Activated CD4-positive, alpha-beta T cell treated with anti-CD3 and anti-CD28 coated beads for 36 hours (primary cell): ENCODE measurements at regions of chr1 and their contacts with region 1.

Region 1: GRCh38 chr1:180502360-180503273 is at the start of gene ACBD6:
- DNase-seq: peak; percentile 94
- ATAC-seq: peak; percentile 95
- H3K4me3 Mint-ChIP-seq: peak within 1 kb of the TSS; percentile 96
- H3K27ac Mint-ChIP-seq: peak within 1 kb of the TSS; percentile 97
- H3K4me1 Mint-ChIP-seq: peaks cover 33% of the 10 kb centered on the region
- H3K27me3 Mint-ChIP-seq: no peaks in the 10 kb centered on the region
- total RNA-seq, gene ACBD6: 45.6 to 46.8 TPM

Region 2: GRCh38 chr1:179954493-179955297 is 547.9 kb before region 1 on chr1 and contains the start of gene CEP350:
- CTCF ChIA-PET with region 1: no interaction called
- POLR2A ChIA-PET with region 1: no interaction called
- intact Hi-C with region 1: loop called in 1 of 2 experiments (anchors 1 kb)
- DNase-seq: peak; percentile 99
- ATAC-seq: peak; percentile 94
- H3K4me3 Mint-ChIP-seq: peak within 1 kb of the TSS; percentile 82
- H3K27ac Mint-ChIP-seq: peak within 1 kb of the TSS; percentile 98
- H3K4me1 Mint-ChIP-seq: peaks cover 47% of the 10 kb centered on the region
- H3K27me3 Mint-ChIP-seq: no peaks in the 10 kb centered on the region
- total RNA-seq, gene CEP350: 38.2 to 42.1 TPM

Region 3: DNA sequence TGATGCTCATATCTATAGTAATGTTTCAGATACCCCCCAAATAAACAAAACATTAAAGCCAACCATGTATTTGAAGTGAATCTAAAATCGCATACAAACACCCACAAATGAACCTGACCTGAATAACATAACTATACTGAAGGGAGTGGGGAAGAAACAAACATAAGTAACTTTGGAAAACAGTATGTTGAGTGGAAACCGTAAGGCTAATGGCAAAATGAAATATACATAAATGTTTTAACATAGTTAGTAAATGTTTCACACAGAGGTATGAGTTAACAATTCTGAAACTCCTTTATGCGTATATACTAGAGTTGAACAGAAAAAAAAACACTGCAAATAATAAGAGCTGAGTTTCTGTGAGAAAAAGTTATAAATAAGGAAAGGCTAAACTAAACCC is 125.8 kb before region 1 on chr1:
- CTCF ChIA-PET with region 1: no interaction called
- POLR2A ChIA-PET with region 1: no interaction called
- intact Hi-C with region 1: no loop called
- DNase-seq: no peak
- ATAC-seq: no peak
- H3K4me3 Mint-ChIP-seq: no peak overlapping the region
- H3K27ac Mint-ChIP-seq: no peak overlapping the region
- H3K4me1 Mint-ChIP-seq: peaks cover 19% of the 10 kb centered on the region
- H3K27me3 Mint-ChIP-seq: no peaks in the 10 kb centered on the region

Region 4: DNA sequence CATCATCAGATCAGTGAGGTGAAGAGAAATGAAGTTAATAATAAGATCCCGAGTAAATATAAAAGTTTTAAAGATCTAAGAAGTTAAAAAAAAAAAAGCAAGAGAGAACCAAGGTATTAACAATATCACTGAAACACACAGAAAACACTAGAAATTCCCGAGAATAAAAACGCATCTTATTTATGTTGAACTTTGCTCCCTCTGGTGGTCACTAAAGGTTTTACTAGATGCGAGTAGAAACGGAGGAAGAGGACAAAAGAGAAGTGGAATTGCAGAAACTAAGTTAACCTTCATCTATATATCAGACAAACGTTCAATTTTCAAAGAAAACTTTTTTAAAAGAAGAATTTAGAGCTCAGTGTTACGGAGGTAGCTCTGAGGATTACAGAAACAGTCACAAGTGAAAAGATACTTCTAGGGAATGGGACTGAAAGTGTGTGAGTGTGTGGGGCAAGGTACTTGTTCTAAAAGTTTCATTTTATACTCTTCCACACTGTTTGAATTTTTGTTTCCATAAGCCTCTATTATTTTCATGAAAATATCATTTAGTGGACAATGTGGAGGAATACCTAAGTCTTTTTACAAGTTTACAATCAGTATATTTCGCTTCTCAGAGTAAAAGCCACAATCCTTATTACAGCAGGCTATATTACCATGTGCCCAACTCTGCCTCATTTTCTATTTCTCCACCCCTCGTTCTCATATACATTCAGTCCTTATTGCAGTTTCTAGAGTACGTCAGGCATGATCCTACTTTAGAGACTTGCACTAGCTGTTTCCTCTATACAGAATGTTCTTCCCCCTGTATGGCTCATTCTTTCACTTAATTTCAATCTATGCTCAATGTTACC is 20.0 kb before region 1 on chr1:
- CTCF ChIA-PET with region 1: interaction called, 31 read pairs
- POLR2A ChIA-PET with region 1: no interaction called
- intact Hi-C with region 1: no loop called
- DNase-seq: no peak
- ATAC-seq: peak; percentile 64
- H3K4me3 Mint-ChIP-seq: no peak overlapping the region
- H3K27ac Mint-ChIP-seq: no peak overlapping the region
- H3K4me1 Mint-ChIP-seq: peaks cover 17% of the 10 kb centered on the region
- H3K27me3 Mint-ChIP-seq: no peaks in the 10 kb centered on the region

Region 5: DNA sequence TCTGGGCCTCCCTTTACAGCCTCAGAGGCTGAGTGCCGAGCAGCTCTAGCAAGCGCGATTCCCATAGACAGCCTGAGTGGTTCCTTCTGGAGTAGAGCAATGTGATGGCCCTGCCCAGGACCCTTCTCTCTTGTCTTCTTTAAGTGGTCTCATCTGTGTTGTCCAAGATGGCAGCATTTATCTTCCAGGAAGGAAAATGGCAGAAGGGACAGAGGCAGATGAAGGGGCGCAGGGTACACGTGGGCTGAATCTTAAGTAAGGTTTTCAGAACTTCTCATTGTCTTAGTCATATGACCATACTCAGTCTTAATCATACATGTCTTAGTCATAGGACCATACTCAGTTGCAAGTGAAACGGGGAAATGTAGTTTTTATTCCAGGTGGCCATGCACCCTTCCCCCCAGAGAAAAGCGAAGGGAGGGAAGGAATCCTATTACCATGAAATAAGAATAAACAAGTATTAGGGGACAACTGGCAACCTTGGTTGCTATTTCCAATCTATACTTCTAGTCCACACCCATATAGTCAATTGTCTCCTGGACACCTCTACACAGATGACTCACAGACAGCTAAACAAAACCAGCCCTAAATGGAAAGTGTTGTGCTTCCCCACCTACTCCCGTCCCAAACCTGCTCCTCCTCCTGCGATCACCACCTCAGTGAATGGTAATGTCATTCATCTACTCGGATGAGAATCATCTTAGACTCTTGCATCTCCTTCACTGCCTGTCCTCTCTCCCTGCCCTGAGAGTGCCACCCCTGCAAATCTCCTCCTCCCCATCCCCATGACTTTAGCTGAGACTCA is 69.4 kb after region 1 on chr1:
- CTCF ChIA-PET with region 1: no interaction called
- POLR2A ChIA-PET with region 1: no interaction called
- intact Hi-C with region 1: loop called in 1 of 2 experiments (anchors 1 kb)
- DNase-seq: peak; percentile 78
- ATAC-seq: peak; percentile 93
- H3K4me3 Mint-ChIP-seq: no peak overlapping the region
- H3K27ac Mint-ChIP-seq: peak overlapping the region; percentile 71
- H3K4me1 Mint-ChIP-seq: peaks cover 23% of the 10 kb centered on the region
- H3K27me3 Mint-ChIP-seq: peaks cover 12% of the 10 kb centered on the region

Region 6: GRCh38 chr1:181105134-181106021 is 602.8 kb after region 1 on chr1:
- CTCF ChIA-PET with region 1: no interaction called
- POLR2A ChIA-PET with region 1: no interaction called
- intact Hi-C with region 1: loop called in 1 of 2 experiments (anchors 5 kb)
- DNase-seq: peak; percentile 95
- ATAC-seq: peak; percentile 83
- H3K4me3 Mint-ChIP-seq: peak overlapping the region; percentile 72
- H3K27ac Mint-ChIP-seq: peak overlapping the region; percentile 55
- H3K4me1 Mint-ChIP-seq: peaks cover 59% of the 10 kb centered on the region
- H3K27me3 Mint-ChIP-seq: peaks cover 15% of the 10 kb centered on the region